H1 (cell line): ENCODE measurements at regions of chr14 and their contacts with region 1.

Region 1: DNA sequence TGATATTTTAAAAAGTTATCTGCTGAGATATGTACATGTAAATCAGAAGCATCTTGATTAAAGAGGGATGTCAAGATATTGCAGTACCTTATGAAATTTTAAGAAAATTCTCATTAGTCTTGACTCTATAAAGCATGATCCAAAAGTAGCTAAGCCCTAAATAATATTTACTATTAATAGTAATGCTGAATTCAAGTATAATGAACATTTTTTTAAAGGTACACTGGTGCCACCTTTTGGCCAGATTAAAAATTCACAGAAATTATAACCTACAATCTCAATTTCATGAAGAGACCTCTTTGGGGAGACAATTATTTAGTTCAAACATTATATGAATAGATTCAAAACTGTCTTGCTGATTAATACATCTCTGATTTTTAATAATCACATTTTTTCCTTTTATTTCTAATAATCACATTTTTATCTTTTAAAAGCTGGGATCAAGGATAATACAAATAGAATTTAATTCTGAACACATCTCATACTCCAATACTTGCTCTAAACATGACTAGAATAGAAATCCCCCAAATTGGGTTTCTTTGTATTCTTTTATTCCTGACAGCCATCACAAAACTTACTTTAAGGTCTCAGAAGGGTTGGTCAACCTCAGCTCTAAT is 13.4 kb downstream of the AKAP5 start:
- DNase-seq: no peak
- H3K4me3 ChIP-seq: no peak overlapping the region
- H3K27ac ChIP-seq: no peak overlapping the region
- H3K4me1 ChIP-seq: no peaks in the 10 kb centered on the region
- H3K27me3 ChIP-seq: no peaks in the 10 kb centered on the region
- CTCF ChIP-seq: no peak
- EP300 ChIP-seq: no peak
- POLR2A ChIP-seq: no peak
- RAD21 ChIP-seq: no peak; a peak in 1 of 4 replicates

Region 2: GRCh38 chr14:64349741-64350490 is 128.8 kb before region 1 on chr14:
- CTCF ChIA-PET with region 1: interaction called, 12 read pairs
- POLR2A ChIA-PET with region 1: interaction called, 3 read pairs
- DNase-seq: no peak
- H3K4me3 ChIP-seq: no peak overlapping the region
- H3K27ac ChIP-seq: no peak overlapping the region
- H3K4me1 ChIP-seq: no peaks in the 10 kb centered on the region
- H3K27me3 ChIP-seq: no peaks in the 10 kb centered on the region
- CTCF ChIP-seq: no peak
- EP300 ChIP-seq: no peak
- POLR2A ChIP-seq: no peak
- RAD21 ChIP-seq: no peak

Region 3: GRCh38 chr14:64491637-64492036 is 12.9 kb after region 1 on chr14:
- CTCF ChIA-PET with region 1: interaction called, 15 read pairs
- POLR2A ChIA-PET with region 1: interaction called, 6 read pairs
- DNase-seq: no peak
- H3K4me3 ChIP-seq: no peak overlapping the region
- H3K27ac ChIP-seq: no peak overlapping the region
- H3K4me1 ChIP-seq: no peaks in the 10 kb centered on the region
- H3K27me3 ChIP-seq: no peaks in the 10 kb centered on the region
- CTCF ChIP-seq: no peak
- EP300 ChIP-seq: no peak
- POLR2A ChIP-seq: no peak
- RAD21 ChIP-seq: no peak

Region 4: DNA sequence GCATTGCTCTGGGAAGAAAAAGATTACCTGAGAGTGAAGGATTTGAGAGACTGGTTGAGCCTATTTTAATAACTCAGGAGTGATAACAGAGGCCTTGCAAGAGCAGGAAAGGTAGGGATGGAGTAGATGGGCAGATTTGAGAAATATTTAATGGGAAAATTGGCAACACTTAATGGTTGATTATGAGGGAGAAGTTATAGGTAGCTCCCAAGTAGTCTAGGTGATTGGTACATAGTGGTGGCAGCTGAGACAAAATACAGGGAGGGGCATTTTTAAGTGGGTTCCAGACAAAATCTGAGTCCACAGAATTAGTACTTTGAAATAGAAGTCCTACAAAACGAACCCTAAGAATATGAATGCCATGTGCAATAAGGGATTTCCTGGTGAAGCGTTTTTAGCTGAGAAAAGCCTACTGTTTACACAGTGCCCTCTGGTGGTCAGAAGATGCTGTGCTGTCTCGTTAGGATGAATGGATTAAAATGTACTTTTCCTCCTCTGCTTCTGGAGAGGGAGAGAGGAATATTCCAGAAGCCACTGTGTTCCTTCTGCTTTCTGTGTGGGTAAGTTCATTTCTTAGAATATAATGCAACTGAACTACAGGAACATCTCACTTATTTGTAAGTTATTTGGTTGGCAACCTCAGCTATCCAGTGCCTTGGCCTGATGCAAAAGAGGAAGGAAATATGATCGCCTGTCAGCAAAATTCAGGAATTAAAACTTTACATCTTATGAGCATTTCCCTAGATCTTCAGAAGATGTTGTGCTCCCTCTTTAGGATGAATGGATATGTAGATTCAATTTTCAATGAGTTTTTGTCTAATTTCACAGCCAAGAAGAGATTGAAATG is 32.3 kb after region 1 on chr14:
- CTCF ChIA-PET with region 1: interaction called, 10 read pairs
- POLR2A ChIA-PET with region 1: no interaction called
- DNase-seq: peak in 1 of 2 experiments; percentile 75
- H3K4me3 ChIP-seq: no peak overlapping the region
- H3K27ac ChIP-seq: no peak overlapping the region
- H3K4me1 ChIP-seq: peaks cover 0 to 7% (median 6%) of the 10 kb centered on the region in 4 experiments; a peak in 4 of 7 replicates
- H3K27me3 ChIP-seq: no peaks in the 10 kb centered on the region
- CTCF ChIP-seq: peak in 2 of 3 experiments; percentile 65 to 93; a peak in 3 of 4 replicates
- EP300 ChIP-seq: no peak
- POLR2A ChIP-seq: no peak
- RAD21 ChIP-seq: peak; percentile 55 to 67